ENCODE measurements at regions of chr9 and their contacts with region 1.

Region 1: DNA sequence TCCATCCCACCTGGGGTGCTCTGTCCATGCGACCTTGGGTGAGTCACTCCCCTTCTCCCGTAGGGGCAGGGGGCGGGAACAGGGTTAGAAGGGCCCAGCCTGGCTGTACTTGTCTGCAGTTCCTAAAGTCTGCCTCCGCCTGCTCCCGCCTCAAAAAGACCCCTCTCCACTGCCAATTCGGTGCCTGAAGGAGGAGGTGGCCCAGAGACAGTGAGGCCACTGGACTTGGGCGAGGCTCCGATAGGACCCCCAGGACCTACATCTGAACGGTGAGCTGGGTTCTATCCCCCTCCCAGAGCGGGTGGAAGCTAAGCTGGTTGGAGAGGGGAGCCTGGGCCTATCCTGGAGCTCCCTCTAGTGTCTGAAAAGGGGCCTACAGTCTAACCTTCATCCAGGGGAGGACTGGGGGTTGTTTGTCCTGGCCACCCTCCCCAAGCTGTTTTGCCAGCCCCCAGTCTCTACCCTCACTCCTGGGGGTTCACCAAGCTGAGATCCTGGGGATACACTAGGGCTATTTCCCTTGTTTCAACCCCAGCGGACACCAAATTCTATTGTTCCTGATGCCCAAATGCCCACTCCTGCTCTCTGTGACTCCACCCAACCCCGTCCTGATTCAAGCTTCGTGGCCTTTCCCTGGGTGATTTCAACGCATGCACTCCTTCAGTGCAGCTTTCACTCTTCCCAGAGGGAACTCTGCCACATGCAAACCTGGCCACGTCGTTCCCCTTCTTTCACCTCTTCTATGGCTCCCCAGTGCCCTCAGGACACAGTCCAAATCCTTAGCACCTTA is 6.1 kb upstream of the CRB2 start:
- DNase-seq: no peak
- H3K4me3 ChIP-seq: no peak overlapping the region
- H3K27ac ChIP-seq: no peak overlapping the region
- H3K4me1 ChIP-seq: peaks cover 6 to 27% (median 24%) of the 10 kb centered on the region in 4 donors
- H3K27me3 ChIP-seq: peaks cover 0 to 31% (median 0%) of the 10 kb centered on the region in 4 donors
- CTCF ChIP-seq: peak; percentile 85 to 99 (median 91)
- EP300 ChIP-seq: no peak
- POLR2A ChIP-seq: no peak

Region 2: DNA sequence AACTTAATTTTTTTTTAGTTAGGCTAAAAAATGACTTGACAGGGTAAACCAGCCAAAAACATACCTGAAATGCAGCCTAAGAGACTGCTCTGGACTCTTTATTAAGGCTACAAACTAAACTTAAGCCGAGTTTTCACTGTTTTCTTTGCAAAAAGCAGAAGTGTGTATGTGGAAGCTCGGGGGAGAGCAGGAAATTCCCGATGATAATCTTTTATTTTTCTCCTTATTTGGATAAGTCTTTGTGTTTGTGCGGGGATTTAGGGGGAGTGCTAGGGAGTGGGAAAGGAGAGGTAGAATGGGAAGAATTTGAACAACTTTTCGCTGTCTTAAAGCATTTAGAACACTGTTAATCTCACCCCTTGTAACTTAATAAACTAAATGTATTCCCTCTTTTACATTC is 347.1 kb before region 1 on chr9:
- intact Hi-C with region 1: loop called (anchors 10 kb)
- DNase-seq: no peak
- H3K4me3 ChIP-seq: peak overlapping the region in 2 of 4 donors; percentile 5 to 25
- H3K27ac ChIP-seq: peak overlapping the region; percentile 39 to 76 (median 60)
- H3K4me1 ChIP-seq: peaks cover 7 to 44% (median 36%) of the 10 kb centered on the region in 4 donors
- H3K27me3 ChIP-seq: no peaks in the 10 kb centered on the region
- CTCF ChIP-seq: no peak
- EP300 ChIP-seq: no peak
- POLR2A ChIP-seq: no peak

Region 3: DNA sequence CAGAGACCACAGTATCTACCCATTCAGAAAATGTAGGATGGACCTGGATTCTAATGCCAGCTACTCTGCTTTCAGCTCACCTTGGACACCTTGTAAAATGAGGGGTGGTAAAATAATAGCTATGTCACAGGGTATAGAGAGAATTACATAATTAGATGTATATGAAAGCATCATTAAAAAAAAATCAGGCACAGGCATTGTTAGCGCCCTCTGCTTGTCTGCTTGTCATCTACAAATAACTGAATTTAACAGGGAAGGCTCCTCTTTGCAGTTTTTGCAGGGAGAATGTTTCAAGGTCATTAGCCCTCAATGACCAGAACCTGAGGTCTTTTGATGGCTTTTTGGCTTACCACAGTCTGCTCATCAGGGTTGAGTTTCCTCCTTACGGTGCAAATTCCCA is 258.4 kb before region 1 on chr9:
- intact Hi-C with region 1: loop called (anchors 5 kb)
- DNase-seq: peak; percentile 39
- H3K4me3 ChIP-seq: no peak overlapping the region
- H3K27ac ChIP-seq: peak overlapping the region in 1 of 4 donors; percentile 23
- H3K4me1 ChIP-seq: peaks cover 0 to 27% (median 14%) of the 10 kb centered on the region in 4 donors
- H3K27me3 ChIP-seq: no peaks in the 10 kb centered on the region
- CTCF ChIP-seq: no peak
- EP300 ChIP-seq: no peak
- POLR2A ChIP-seq: no peak

Region 4: GRCh38 chr9:123157216-123157615 is 192.7 kb before region 1 on chr9:
- intact Hi-C with region 1: no loop called
- DNase-seq: no peak
- H3K4me3 ChIP-seq: no peak overlapping the region
- H3K27ac ChIP-seq: no peak overlapping the region
- H3K4me1 ChIP-seq: no peaks in the 10 kb centered on the region
- H3K27me3 ChIP-seq: no peaks in the 10 kb centered on the region
- CTCF ChIP-seq: no peak
- EP300 ChIP-seq: no peak
- POLR2A ChIP-seq: no peak

Region 5: GRCh38 chr9:123268240-123268949 is 81.5 kb before region 1 on chr9 and contains the start of gene STRBP:
- intact Hi-C with region 1: loop called (anchors 5 kb)
- DNase-seq: peak; percentile 94
- H3K4me3 ChIP-seq: peak within 1 kb of the TSS; percentile 88 to 93 (median 92)
- H3K27ac ChIP-seq: peak within 1 kb of the TSS; percentile 65 to 78 (median 70)
- H3K4me1 ChIP-seq: peaks cover 10 to 24% (median 17%) of the 10 kb centered on the region in 4 donors
- H3K27me3 ChIP-seq: no peaks in the 10 kb centered on the region
- CTCF ChIP-seq: peak in 1 of 3 experiments; percentile 25
- EP300 ChIP-seq: no peak
- POLR2A ChIP-seq: no peak
- total RNA-seq, gene STRBP: 11.2 to 20.6 (median 14.5) TPM

Region 6: GRCh38 chr9:123508048-123508447 is 158.2 kb after region 1 on chr9:
- intact Hi-C with region 1: no loop called
- DNase-seq: no peak
- H3K4me3 ChIP-seq: peak overlapping the region; percentile 2 to 24 (median 16)
- H3K27ac ChIP-seq: no peak overlapping the region
- H3K4me1 ChIP-seq: peaks cover 0 to 4% (median 0%) of the 10 kb centered on the region in 4 donors
- H3K27me3 ChIP-seq: no peaks in the 10 kb centered on the region
- CTCF ChIP-seq: no peak
- EP300 ChIP-seq: no peak
- POLR2A ChIP-seq: no peak

Region 7: GRCh38 chr9:123523001-123523400 is 173.1 kb after region 1 on chr9:
- intact Hi-C with region 1: no loop called
- DNase-seq: peak; percentile 82
- H3K4me3 ChIP-seq: no peak overlapping the region
- H3K27ac ChIP-seq: no peak overlapping the region
- H3K4me1 ChIP-seq: no peaks in the 10 kb centered on the region
- H3K27me3 ChIP-seq: no peaks in the 10 kb centered on the region
- CTCF ChIP-seq: no peak
- EP300 ChIP-seq: no peak
- POLR2A ChIP-seq: no peak

Region 8: GRCh38 chr9:124079176-124079925 is 729.5 kb after region 1 on chr9:
- intact Hi-C with region 1: no loop called
- DNase-seq: no peak
- H3K4me3 ChIP-seq: no peak overlapping the region
- H3K27ac ChIP-seq: no peak overlapping the region
- H3K4me1 ChIP-seq: no peaks in the 10 kb centered on the region
- H3K27me3 ChIP-seq: peaks cover 0 to 7% (median 0%) of the 10 kb centered on the region in 4 donors
- CTCF ChIP-seq: no peak
- EP300 ChIP-seq: no peak
- POLR2A ChIP-seq: no peak